Activated B cell treated with CpG ODN at 0.5 μM for 24 hours (primary cell): ENCODE measurements at regions of chrX and their contacts with region 1.

Region 1: DNA sequence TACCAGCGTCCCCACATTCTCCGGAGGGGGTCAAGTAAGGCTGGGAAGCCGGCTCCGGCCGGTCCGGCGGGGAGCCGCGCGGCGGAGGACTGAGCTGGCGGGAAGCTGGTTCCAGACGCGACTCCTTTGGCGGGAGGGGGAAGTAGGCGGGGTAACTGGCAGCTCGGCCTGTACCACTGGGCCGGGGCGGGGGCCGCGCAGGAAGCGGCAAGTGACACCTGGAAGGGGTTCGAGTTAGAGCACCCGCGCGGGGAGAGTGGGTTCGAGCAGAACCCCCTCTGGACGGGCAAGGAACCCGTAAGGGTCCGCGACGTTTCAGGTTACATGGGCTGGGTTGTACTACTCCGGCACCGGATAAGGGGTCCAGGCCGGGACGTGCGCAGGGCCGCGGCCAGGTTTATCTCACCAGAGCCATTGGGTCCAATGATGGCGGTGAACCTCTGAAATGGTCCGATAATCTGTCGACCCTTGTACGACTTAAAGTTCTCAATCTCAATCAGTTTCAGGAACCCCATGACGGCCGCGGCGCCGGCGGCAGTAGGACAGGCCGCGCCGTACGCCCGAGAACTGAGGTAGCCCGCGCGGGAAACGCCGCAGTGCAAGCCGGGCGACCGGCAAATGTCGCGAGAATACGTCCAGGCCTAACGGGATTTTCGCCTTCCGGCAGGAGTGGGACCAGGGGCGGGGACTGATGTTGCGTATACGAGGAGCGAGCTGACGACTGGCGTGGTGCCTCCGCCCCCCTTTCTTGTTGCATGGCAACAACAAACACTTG is at the start of gene SMC1A:
- DNase-seq: peak; percentile 79
- ATAC-seq: peak; percentile 89
- H3K4me3 Mint-ChIP-seq: peak within 1 kb of the TSS; percentile 92
- H3K27ac Mint-ChIP-seq: peak within 1 kb of the TSS; percentile 96
- H3K4me1 Mint-ChIP-seq: peaks cover 29% of the 10 kb centered on the region
- H3K27me3 Mint-ChIP-seq: no peaks in the 10 kb centered on the region
- CTCF ChIP-seq: no peak
- total RNA-seq, gene SMC1A: 75.8 and 84.0 TPM in 2 replicates

Region 2: DNA sequence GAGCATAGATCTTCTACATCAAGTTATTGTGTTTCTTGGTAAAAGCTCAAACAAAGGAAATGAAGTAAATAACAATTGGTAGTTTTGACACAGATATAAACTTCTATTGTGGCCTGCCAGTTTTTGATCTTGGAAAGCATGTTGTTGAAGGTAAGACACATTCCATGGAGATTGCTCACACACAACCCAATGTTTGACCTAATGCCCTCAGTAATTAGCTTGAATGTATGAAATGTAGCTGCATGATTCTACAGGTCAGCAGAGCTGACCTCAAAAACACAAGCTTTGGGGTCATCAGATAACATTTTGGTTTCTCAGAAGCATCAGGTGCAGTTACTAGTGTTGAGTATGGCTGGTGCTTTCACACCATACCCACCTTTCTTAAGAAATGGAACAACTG is 357.2 kb before region 1 on chrX:
- CTCF ChIA-PET with region 1: no interaction called
- POLR2A ChIA-PET with region 1: no interaction called
- intact Hi-C with region 1: no loop called
- DNase-seq: no peak
- ATAC-seq: no peak
- H3K4me3 Mint-ChIP-seq: no peak overlapping the region
- H3K27ac Mint-ChIP-seq: no peak overlapping the region
- H3K4me1 Mint-ChIP-seq: no peaks in the 10 kb centered on the region
- H3K27me3 Mint-ChIP-seq: no peaks in the 10 kb centered on the region
- CTCF ChIP-seq: no peak

Region 3: DNA sequence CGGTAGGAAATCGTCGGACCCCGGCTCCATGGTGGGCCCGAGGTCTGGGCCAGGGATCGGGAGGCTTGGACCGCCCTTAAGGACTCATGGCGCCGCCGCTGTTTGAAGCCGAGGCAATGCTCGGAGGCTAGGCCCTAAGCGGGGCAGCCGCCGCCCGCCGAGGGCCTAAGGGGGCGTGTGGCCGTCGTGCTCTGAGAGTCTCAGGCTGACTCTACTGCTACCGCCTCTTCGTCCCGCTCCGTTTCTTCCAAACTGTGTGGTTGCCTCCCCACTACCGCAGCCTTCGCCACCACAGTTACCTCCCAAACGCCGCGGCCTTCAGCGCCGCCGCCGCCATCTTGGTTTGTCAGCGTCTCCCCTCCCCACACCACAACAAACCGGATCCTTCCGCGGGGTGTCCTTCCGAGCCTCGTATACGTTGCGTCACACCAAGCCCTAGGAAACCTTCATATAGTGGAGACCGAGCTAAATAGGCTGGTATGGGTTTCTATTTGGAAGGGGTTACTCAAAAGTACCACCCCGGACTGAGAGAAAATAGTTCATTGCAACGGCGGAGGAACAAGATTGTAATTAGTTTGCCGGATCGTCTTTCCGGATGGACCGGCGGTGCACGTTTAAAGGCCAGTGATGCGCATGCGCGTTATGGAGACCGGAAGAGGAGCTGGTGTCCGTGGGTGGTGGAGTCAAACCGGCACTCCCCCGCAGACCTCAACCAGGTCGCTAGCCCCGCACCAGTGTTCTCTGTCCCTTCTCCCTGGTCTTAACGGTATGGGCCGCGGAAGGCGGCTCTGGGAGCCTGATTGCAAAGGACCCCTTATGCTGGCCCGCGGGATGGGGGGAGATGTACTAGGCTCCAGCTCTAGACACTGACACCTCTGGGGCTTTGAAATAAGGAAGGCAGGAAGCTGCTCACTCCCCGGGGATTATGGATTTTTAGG is 197.1 kb before region 1 on chrX and contains the start of gene KDM5C:
- CTCF ChIA-PET with region 1: no interaction called
- POLR2A ChIA-PET with region 1: interaction called, 12 read pairs
- intact Hi-C with region 1: loop called (anchors 1 kb)
- DNase-seq: peak; percentile 69
- ATAC-seq: peak; percentile 91
- H3K4me3 Mint-ChIP-seq: peak within 1 kb of the TSS; percentile 98
- H3K27ac Mint-ChIP-seq: peak within 1 kb of the TSS; percentile 98
- H3K4me1 Mint-ChIP-seq: peaks cover 33% of the 10 kb centered on the region
- H3K27me3 Mint-ChIP-seq: no peaks in the 10 kb centered on the region
- CTCF ChIP-seq: no peak
- total RNA-seq, gene KDM5C: 109 and 117 TPM in 2 replicates

Region 4: GRCh38 chrX:53864591-53864990 is 442.3 kb after region 1 on chrX:
- CTCF ChIA-PET with region 1: no interaction called
- POLR2A ChIA-PET with region 1: no interaction called
- intact Hi-C with region 1: no loop called
- DNase-seq: no peak
- ATAC-seq: no peak
- H3K4me3 Mint-ChIP-seq: no peak overlapping the region
- H3K27ac Mint-ChIP-seq: no peak overlapping the region
- H3K4me1 Mint-ChIP-seq: no peaks in the 10 kb centered on the region
- H3K27me3 Mint-ChIP-seq: peaks cover 2% of the 10 kb centered on the region
- CTCF ChIP-seq: no peak